ENCODE measurements at regions of chr13 and their contacts with region 1.

Region 1: DNA sequence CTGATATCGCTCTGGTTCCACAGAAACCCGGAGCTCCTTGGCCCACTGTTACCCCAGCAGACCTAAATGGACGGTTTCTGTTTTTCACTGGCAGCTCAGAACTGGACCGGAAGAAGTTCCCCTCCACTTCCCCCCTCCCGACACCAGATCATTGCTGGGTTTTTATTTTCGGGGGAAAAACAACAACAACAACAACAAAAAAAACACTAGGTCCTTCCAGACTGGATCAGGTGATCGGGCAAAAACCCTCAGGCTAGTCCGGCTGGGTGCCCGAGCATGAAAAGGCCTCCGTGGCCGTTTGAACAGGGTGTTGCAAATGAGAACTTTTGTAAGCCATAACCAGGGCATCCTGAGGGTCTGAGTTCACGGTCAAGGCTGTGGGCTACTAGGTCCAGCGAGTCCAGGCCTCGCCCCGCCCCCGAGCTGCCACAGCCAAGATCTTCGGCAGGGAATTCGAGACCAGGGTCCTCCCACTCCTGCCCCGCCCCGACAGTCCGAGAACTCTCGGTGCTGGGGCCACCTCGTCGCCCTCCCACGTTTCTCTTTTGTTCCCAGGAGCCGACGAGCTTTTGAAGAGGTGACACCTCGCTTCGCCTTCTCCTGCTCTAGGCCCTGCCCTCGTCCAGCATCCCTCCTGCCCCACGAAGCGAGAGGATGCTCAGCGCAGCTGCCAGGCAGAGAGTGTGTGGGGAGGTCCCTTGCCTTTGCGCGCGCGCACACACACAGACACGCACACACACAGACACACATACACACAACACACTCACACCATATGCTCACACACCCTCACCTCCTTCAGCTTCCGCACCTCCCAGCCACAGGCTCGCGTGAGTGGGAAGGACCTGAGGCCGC is 8.8 kb downstream of the ZIC2 start:
- DNase-seq: no peak
- H3K4me3 ChIP-seq: no peak overlapping the region
- H3K27ac ChIP-seq: no peak overlapping the region
- H3K4me1 ChIP-seq: peaks cover 0 to 32% (median 11%) of the 10 kb centered on the region in 4 donors
- H3K27me3 ChIP-seq: peaks cover 69 to 99% (median 98%) of the 10 kb centered on the region in 3 donors
- CTCF ChIP-seq: no peak
- EP300 ChIP-seq: no peak
- POLR2A ChIP-seq: no peak

Region 2: GRCh38 chr13:99955747-99956472 is 34.4 kb before region 1 on chr13:
- intact Hi-C with region 1: loop called (anchors 5 kb)
- DNase-seq: no peak
- H3K4me3 ChIP-seq: peak overlapping the region in 2 of 4 donors; percentile 17 to 27
- H3K27ac ChIP-seq: no peak overlapping the region
- H3K4me1 ChIP-seq: peaks cover 0 to 41% (median 33%) of the 10 kb centered on the region in 4 donors
- H3K27me3 ChIP-seq: peaks cover 56 to 96% (median 62%) of the 10 kb centered on the region in 3 donors
- CTCF ChIP-seq: no peak
- EP300 ChIP-seq: no peak
- POLR2A ChIP-seq: no peak

Region 3: DNA sequence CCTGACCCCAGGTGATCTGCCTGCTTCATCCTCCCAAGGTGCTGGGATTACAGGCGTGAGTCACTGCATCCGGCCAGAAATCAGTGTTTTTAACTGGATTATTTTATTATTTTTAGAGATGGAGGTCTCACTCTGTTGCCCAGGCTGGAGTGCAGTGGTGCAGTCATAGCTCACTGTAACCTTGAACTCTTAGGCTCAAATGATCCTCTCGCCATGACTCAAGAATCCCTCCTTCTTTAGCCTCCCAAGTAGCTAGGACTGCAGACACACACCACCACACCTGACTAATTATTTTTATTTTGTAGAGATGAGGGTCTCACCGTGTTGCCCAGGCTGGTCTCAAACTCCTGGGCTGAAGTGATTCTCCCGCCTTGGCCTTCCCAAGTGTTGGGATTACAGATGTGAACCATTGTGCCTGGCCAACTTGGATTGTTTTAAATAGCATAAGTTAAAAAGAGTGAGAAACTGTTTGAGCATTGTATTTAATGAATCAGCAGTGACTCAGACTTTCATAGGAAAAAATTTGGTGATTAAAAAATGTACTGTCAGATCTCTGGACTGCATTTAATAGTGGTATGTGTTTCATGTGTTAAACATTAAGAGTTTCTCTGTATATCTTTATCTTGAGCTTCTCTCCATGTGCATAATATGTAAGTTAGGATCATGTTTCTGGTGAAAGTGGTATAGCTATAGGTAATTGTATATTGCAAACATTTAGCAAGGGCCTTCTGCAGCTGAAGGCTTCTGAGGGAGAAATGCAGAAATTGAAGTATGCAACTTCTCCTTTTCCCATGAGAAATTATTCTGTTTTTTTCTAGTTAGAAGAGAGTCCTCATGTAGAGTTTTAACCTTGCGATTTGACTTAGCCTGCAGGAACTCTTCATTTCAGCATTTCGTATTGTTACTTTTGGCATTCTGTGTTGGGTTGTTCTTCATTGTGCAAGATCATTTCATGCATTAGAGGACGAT is 219.8 kb after region 1 on chr13:
- intact Hi-C with region 1: no loop called
- DNase-seq: no peak
- H3K4me3 ChIP-seq: no peak overlapping the region
- H3K27ac ChIP-seq: no peak overlapping the region
- H3K4me1 ChIP-seq: peaks cover 0 to 14% (median 0%) of the 10 kb centered on the region in 4 donors
- H3K27me3 ChIP-seq: no peaks in the 10 kb centered on the region
- CTCF ChIP-seq: no peak
- EP300 ChIP-seq: no peak
- POLR2A ChIP-seq: no peak